SK-N-SH (cell line): ENCODE measurements at regions of chr2 and their contacts with region 1.

Region 1: GRCh38 chr2:118003396-118003824 is 10.5 kb downstream of the CCDC93 start:
- DNase-seq: peak; percentile 69
- H3K4me3 ChIP-seq: peak overlapping the region in 1 of 2 experiments; percentile 9; a peak in 1 of 4 replicates
- H3K27ac ChIP-seq: peak overlapping the region in 1 of 2 experiments; percentile 18; a peak in 2 of 4 replicates
- H3K4me1 ChIP-seq: no peaks in the 10 kb centered on the region; a peak in 2 of 4 replicates
- H3K27me3 ChIP-seq: no peaks in the 10 kb centered on the region
- CTCF ChIP-seq: peak; percentile 88
- EP300 ChIP-seq: no peak
- RAD21 ChIP-seq: peak; percentile 97

Region 2: GRCh38 chr2:117835990-117836760 is 167.2 kb before region 1 on chr2:
- CTCF ChIA-PET with region 1: interaction called, 94 read pairs
- POLR2A ChIA-PET with region 1: interaction called, 7 read pairs
- DNase-seq: peak; percentile 86
- H3K4me3 ChIP-seq: peak overlapping the region in 1 of 2 experiments; percentile 48; a peak in 1 of 4 replicates
- H3K27ac ChIP-seq: no peak overlapping the region
- H3K4me1 ChIP-seq: peaks cover 0 to 10% of the 10 kb centered on the region in 2 experiments; a peak in 1 of 4 replicates
- H3K27me3 ChIP-seq: no peaks in the 10 kb centered on the region
- CTCF ChIP-seq: peak; percentile 81
- EP300 ChIP-seq: no peak
- RAD21 ChIP-seq: peak; percentile 63

Region 3: GRCh38 chr2:117949806-117950205 is 53.6 kb before region 1 on chr2:
- CTCF ChIA-PET with region 1: interaction called, 19 read pairs
- POLR2A ChIA-PET with region 1: no interaction called
- DNase-seq: no peak
- H3K4me3 ChIP-seq: no peak overlapping the region
- H3K27ac ChIP-seq: no peak overlapping the region
- H3K4me1 ChIP-seq: peaks cover 0 to 7% of the 10 kb centered on the region in 2 experiments; a peak in 1 of 4 replicates
- H3K27me3 ChIP-seq: no peaks in the 10 kb centered on the region
- CTCF ChIP-seq: no peak
- EP300 ChIP-seq: no peak
- RAD21 ChIP-seq: no peak

Region 4: DNA sequence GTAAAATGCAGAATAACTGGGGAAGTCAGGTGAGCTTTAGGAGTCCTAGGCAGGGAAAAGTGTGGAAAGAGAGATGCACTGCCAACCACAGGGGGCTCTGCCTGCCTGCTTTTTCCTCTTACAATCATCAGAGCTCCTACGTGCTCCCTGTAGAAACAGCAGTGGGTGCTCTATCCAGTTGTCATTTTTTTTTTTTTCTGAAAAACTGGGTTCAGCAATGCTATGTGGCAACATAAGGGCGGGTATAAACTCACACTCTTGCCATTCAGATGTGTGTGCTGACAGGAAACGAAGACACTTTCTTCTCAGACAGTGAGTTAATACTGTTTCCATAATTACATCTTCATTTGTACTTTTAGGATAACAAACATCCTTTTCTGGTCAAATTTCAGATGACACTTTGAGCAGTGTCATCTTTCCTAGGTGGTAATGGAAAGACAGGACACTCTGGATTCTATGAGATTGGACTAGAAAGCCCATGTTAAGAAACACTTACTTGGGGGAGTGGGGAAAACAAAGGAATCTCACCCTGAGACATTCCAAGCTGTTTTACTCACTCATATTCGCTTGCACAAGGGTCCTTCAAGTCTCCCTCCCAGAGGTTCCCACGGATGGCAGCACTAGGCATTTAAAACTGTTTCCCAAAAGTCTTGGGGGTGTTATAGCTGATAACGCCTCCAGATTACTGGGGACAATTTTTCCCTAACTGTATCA is 30.8 kb before region 1 on chr2:
- CTCF ChIA-PET with region 1: interaction called, 39 read pairs
- POLR2A ChIA-PET with region 1: no interaction called
- DNase-seq: no peak
- H3K4me3 ChIP-seq: no peak overlapping the region
- H3K27ac ChIP-seq: peak overlapping the region; percentile 78 to 80; a peak in 3 of 4 replicates
- H3K4me1 ChIP-seq: peaks cover 7 to 35% of the 10 kb centered on the region in 2 experiments
- H3K27me3 ChIP-seq: no peaks in the 10 kb centered on the region
- CTCF ChIP-seq: peak; percentile 23; the same call in 1 of the 2 replicates
- EP300 ChIP-seq: no peak
- RAD21 ChIP-seq: no peak

Region 5: GRCh38 chr2:118013724-118014491 is 10.5 kb after region 1 on chr2 and contains the start of gene CCDC93:
- CTCF ChIA-PET with region 1: interaction called, 21 read pairs
- POLR2A ChIA-PET with region 1: no interaction called
- DNase-seq: peak; percentile 99
- H3K4me3 ChIP-seq: peak within 1 kb of the TSS; percentile 89 to 94
- H3K27ac ChIP-seq: peak within 1 kb of the TSS; percentile 61 to 75; a peak in 3 of 4 replicates
- H3K4me1 ChIP-seq: peaks cover 10 to 11% of the 10 kb centered on the region in 2 experiments; a peak in 3 of 4 replicates
- H3K27me3 ChIP-seq: no peaks in the 10 kb centered on the region
- CTCF ChIP-seq: no peak
- EP300 ChIP-seq: no peak
- RAD21 ChIP-seq: no peak
- polyA plus RNA-seq, gene CCDC93: 11.7 and 15.0 TPM in 2 replicates